ENCODE measurements at regions of chrX and their contacts with region 1.

Region 1: GRCh38 chrX:68710870-68711576 is 63.6 kb downstream of the STARD8 start:
- DNase-seq: no peak
- ATAC-seq: peak; percentile 95
- H3K4me3 ChIP-seq: no peak overlapping the region
- H3K27ac ChIP-seq: no peak overlapping the region
- H3K4me1 ChIP-seq: no peaks in the 10 kb centered on the region
- H3K27me3 ChIP-seq: no peaks in the 10 kb centered on the region
- CTCF ChIP-seq: peak; percentile 75

Region 2: DNA sequence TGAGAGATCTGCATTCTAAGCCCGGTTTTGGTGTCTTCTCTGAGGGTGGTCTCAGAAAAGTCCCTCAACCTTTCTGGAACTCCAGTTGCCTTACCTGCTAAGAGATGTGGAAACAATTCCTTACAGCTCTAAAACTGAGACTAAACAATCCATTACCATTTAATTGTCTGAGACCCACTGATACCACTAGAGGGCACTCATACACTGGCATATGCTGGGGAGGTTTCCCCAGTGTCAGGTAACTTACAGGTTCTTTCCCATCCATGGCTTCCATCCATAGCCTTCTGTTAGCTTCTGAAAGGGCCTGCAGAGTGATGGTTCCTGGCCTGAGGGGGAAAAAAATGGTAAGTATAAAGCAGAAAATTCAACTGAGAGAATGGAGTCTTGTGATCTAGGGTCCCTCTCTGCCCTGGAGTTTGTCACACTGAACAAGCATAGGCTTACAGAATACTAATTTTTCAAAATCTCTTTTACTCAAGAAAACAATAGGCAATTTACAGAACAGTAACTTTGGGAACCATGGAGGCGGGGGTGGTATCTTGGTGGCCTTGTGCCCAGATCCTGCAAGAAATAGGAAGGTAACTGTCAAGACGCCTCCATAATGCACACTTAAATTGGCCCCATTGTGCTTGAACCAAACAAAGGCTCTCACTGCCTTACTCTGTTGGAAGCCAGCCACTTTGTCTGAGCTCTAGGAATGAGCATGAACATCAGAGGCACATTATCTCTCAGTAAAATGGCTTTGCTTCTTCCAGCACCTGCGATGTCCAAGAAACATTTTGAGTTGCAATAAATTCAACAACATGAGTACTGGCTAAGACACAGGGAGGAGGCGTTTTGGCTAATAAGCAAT is 513.9 kb before region 1 on chrX:
- CTCF ChIA-PET with region 1: interaction called, 5 read pairs
- POLR2A ChIA-PET with region 1: no interaction called
- in situ Hi-C with region 1: no loop called
- intact Hi-C with region 1: loop called (anchors 5 kb)
- DNase-seq: peak; percentile 38
- ATAC-seq: peak; percentile 84
- H3K4me3 ChIP-seq: no peak overlapping the region
- H3K27ac ChIP-seq: no peak overlapping the region
- H3K4me1 ChIP-seq: no peaks in the 10 kb centered on the region
- H3K27me3 ChIP-seq: no peaks in the 10 kb centered on the region
- CTCF ChIP-seq: peak; percentile 76

Region 3: DNA sequence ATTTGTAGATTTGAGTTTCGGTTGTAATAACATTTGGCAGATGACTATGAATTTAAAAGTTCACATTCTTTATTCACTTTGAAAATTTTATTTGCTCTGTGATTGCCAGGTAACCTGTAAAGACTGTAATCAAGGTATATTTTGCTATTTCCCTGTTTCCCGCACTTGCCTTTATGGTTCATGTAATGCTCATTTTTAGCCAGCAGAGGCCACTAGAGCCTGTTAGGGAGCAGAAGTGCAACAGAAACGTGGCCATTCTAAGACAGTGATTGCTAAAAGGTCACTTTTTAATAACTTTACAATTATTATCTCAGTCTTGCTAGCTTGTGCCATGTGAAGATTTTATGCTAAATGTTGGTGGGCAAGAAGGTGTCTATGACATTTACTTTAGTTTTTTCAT is 199.8 kb before region 1 on chrX:
- CTCF ChIA-PET with region 1: interaction called, 9 read pairs
- POLR2A ChIA-PET with region 1: no interaction called
- in situ Hi-C with region 1: no loop called
- intact Hi-C with region 1: loop called (anchors 5 kb)
- DNase-seq: no peak
- ATAC-seq: 0 out of 2 replicates have a peak, but pooled peaks have one; percentile 65
- H3K4me3 ChIP-seq: no peak overlapping the region
- H3K27ac ChIP-seq: no peak overlapping the region
- H3K4me1 ChIP-seq: no peaks in the 10 kb centered on the region
- H3K27me3 ChIP-seq: no peaks in the 10 kb centered on the region
- CTCF ChIP-seq: peak; percentile 75; the same call in 1 of the 2 replicates

Measured in Panc1 (cell line).